Activated CD4-positive, alpha-beta T cell treated with anti-CD3 and anti-CD28 coated beads, Interleukin-2, amount 10 ng/mL, durations not matched to agents 24 days and 14 days (primary cell): ENCODE measurements at regions of chr15 and their contacts with region 1.

Region 1: DNA sequence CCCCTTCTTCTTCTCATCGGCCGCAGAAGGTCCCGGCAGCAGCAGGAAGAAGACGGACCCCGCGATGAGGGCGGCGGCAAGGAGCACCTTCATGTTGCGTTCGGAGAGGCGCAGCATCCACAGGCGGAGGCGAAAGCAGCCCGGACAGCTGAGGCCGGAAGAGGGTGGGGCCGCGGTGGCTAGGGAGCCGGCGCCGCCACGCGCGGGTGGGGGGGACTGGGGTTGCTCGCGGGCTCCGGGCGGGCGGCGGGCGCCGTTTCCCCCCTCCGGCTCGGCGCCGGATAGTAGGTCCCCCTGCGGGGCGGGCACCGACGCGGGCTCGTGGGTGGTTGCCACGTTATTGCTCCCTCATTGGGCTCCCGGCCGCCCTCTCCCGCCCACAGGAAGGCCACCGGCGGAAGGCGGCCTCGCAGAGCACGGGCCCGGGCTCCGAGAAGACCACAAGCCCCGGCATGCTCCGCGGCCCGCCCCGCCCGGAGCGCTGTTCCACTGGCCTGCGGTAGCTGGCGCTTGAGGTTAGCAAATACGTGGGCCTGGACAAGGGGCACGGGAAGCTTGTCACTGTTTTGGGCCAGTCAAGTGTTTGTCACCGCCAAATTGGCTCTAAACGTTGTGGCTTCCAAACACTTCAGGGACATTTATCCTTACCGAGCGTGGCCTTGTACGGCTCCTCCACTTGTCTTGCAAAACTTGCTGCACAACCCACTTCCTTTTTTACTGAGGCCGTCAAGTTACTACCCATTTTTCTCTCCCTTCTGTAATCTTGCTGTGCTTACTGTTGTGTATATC is at the start of gene PPIB:
- DNase-seq: peak; percentile 99
- H3K4me3 Mint-ChIP-seq: peak within 1 kb of the TSS; percentile 97
- H3K27ac Mint-ChIP-seq: peak within 1 kb of the TSS; percentile 95
- H3K4me1 Mint-ChIP-seq: peaks cover 48% of the 10 kb centered on the region
- H3K27me3 Mint-ChIP-seq: no peaks in the 10 kb centered on the region
- total RNA-seq, gene PPIB: 384 and 397 TPM in 2 replicates

Region 2: DNA sequence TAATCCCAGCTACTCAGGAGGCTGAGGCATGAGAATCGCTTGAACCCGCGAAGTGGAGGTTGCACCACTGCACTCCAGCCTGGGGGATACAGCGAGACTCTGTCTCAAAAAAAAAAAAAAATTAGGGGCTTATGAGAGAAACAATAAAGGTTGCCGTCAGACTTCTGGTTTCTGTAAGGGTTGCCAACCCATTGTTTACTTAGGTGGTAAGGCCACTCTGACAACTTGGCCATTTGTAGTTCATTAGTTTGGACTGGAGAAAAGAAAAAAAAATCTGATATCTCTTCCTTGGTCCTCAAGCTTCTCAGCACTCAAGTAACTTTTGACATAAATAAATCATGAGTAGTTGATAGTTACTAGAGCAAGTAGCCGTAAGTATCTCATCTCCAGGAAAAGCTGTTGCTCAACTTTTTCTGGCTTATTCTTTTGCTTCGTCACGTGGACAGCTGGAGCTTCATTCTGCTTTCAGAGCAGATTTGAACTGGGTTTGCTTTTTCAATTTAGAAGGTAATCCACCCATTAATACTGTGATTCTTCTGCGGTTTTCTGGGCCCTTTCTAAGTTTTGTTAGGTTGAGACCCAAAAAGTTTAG is 57.9 kb before region 1 on chr15:
- intact Hi-C with region 1: no loop called
- DNase-seq: no peak
- H3K4me3 Mint-ChIP-seq: no peak overlapping the region
- H3K27ac Mint-ChIP-seq: no peak overlapping the region
- H3K4me1 Mint-ChIP-seq: peaks cover 13% of the 10 kb centered on the region
- H3K27me3 Mint-ChIP-seq: no peaks in the 10 kb centered on the region

Region 3: DNA sequence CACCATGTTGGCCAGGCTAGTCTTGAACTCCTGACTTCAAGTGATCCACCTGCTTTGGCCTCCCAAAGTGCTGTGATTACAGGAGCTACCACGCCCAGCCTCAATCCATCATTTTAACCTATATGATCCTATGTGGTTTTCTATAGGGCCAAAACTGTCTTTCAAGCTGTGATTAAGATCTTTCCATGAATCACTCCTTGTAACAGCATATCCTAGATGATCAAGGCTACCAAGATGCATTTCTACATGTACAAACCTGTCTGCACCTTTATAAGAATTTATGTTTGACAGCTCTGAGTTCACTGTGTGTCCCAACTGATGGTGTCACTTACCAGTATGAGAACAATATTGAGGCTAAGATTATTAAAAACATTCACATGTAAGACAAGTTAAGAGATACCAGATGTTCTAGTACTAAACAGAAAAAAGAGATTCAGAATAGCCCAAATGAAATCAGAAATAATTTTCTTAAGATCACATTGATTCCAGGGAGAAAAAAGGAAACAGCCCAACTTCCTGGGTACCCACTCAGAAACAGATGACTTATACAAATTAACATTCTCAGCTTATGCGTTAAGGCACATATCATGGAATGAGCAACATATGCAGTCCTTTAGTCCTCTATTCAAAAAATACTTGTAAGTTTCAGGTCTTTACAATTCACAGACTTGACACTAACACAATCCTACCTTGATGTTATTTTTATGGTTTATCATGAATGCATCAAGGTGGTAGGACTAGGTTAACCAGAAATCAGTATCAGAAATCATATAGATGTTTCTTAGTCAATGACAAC is 24.5 kb after region 1 on chr15:
- intact Hi-C with region 1: loop called (anchors 1 kb)
- DNase-seq: no peak
- H3K4me3 Mint-ChIP-seq: no peak overlapping the region
- H3K27ac Mint-ChIP-seq: peak overlapping the region; percentile 77
- H3K4me1 Mint-ChIP-seq: peaks cover 17% of the 10 kb centered on the region
- H3K27me3 Mint-ChIP-seq: no peaks in the 10 kb centered on the region

Region 4: GRCh38 chr15:64381000-64381752 is 218.1 kb after region 1 on chr15 and contains the start of gene PCLAF:
- intact Hi-C with region 1: loop called (anchors 1 kb)
- DNase-seq: peak; percentile 98
- H3K4me3 Mint-ChIP-seq: peak within 1 kb of the TSS; percentile 89
- H3K27ac Mint-ChIP-seq: peak within 1 kb of the TSS; percentile 86
- H3K4me1 Mint-ChIP-seq: peaks cover 18% of the 10 kb centered on the region
- H3K27me3 Mint-ChIP-seq: no peaks in the 10 kb centered on the region
- total RNA-seq, gene PCLAF: 67.6 and 81.9 TPM in 2 replicates

Region 5: GRCh38 chr15:64387562-64388168 is 224.6 kb after region 1 on chr15 and contains the start of gene TRIP4:
- intact Hi-C with region 1: loop called (anchors 1 kb)
- DNase-seq: peak; percentile 99
- H3K4me3 Mint-ChIP-seq: peak within 1 kb of the TSS; percentile 97
- H3K27ac Mint-ChIP-seq: peak within 1 kb of the TSS; percentile 93
- H3K4me1 Mint-ChIP-seq: peaks cover 13% of the 10 kb centered on the region
- H3K27me3 Mint-ChIP-seq: no peaks in the 10 kb centered on the region
- total RNA-seq, gene TRIP4: 21.1 and 23.9 TPM in 2 replicates